Activated CD4-positive, alpha-beta memory T cell treated with anti-CD3 and anti-CD28 coated beads for 36 hours (primary cell): ENCODE measurements at regions of chr11 and their contacts with region 1.

Region 1: GRCh38 chr11:65117216-65118096 is at the start of gene ZNHIT2:
- DNase-seq: peak; percentile 100
- H3K4me3 Mint-ChIP-seq: peak within 1 kb of the TSS; percentile 86
- H3K27ac Mint-ChIP-seq: peak within 1 kb of the TSS; percentile 95
- H3K4me1 Mint-ChIP-seq: peaks cover 68% of the 10 kb centered on the region
- H3K27me3 Mint-ChIP-seq: no peaks in the 10 kb centered on the region
- total RNA-seq, gene ZNHIT2: 9.3 to 9.7 TPM

Region 2: GRCh38 chr11:64240394-64241174 is 876.9 kb before region 1 on chr11 and contains the start of gene FKBP2:
- CTCF ChIA-PET with region 1: no interaction called
- POLR2A ChIA-PET with region 1: no interaction called
- intact Hi-C with region 1: loop called (anchors 10 kb)
- DNase-seq: peak; percentile 98
- H3K4me3 Mint-ChIP-seq: peak within 1 kb of the TSS; percentile 89
- H3K27ac Mint-ChIP-seq: peak within 1 kb of the TSS; percentile 98
- H3K4me1 Mint-ChIP-seq: peaks cover 37% of the 10 kb centered on the region
- H3K27me3 Mint-ChIP-seq: no peaks in the 10 kb centered on the region
- total RNA-seq, gene FKBP2: 28.7 to 34.9 TPM

Region 3: GRCh38 chr11:64723117-64723906 is 394.1 kb before region 1 on chr11 and contains the start of gene NRXN2:
- CTCF ChIA-PET with region 1: no interaction called
- POLR2A ChIA-PET with region 1: no interaction called
- intact Hi-C with region 1: no loop called
- DNase-seq: peak; percentile 91
- H3K4me3 Mint-ChIP-seq: peak within 1 kb of the TSS; percentile 59
- H3K27ac Mint-ChIP-seq: peak within 1 kb of the TSS; percentile 28
- H3K4me1 Mint-ChIP-seq: peaks cover 6% of the 10 kb centered on the region
- H3K27me3 Mint-ChIP-seq: peaks cover 15% of the 10 kb centered on the region
- total RNA-seq, gene NRXN2: 0.31 to 0.41 TPM

Region 4: GRCh38 chr11:64846998-64847666 is 270.3 kb before region 1 on chr11:
- CTCF ChIA-PET with region 1: interaction called, 8 read pairs
- POLR2A ChIA-PET with region 1: no interaction called
- intact Hi-C with region 1: loop called (anchors 2 kb)
- DNase-seq: peak; percentile 94
- H3K4me3 Mint-ChIP-seq: no peak overlapping the region
- H3K27ac Mint-ChIP-seq: peak overlapping the region; percentile 18
- H3K4me1 Mint-ChIP-seq: peaks cover 48% of the 10 kb centered on the region
- H3K27me3 Mint-ChIP-seq: no peaks in the 10 kb centered on the region

Region 5: DNA sequence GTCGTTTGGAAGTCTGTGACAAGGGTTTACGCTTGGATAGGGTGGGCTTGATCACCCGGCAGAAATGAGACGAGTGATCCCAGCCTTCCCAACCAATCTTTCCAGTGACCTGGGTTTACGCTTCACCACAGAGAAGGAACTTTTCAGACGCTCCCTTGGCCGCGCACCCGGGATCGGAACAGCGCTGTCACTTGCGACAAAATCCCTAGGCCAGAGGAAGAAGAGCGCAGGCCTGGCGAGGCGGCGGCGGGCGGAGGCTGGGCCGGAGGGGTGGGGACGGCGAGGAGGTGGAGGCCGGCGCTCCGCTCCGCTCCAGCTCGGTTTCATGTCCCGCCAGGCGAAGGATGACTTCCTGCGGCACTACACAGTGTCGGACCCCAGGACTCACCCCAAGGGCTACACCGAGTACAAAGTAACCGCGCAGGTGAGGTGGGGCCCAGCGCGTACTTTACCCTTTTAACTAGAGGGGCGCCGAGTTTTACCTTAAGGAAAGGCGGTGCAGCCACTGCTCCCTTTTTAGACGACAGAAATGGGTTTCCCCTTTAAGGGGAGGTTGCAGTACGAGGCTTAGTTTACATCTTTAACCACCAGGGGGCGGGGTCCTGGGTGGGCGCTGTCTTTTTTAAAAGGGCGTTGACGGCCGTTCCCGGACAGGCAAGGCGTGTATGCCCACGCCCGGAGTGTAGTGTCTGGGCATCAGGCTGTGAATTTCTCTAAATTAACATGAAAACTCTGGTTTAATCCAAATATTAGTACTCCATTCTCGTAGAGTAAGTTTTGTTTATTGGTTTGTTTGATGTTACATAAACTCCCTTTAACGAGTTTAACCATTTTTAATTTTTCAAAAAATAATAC is 90.0 kb before region 1 on chr11 and contains the start of gene SNX15:
- CTCF ChIA-PET with region 1: interaction called, 3 read pairs
- POLR2A ChIA-PET with region 1: no interaction called
- intact Hi-C with region 1: loop called (anchors 1 kb)
- DNase-seq: peak; percentile 95
- H3K4me3 Mint-ChIP-seq: peak within 1 kb of the TSS; percentile 65
- H3K27ac Mint-ChIP-seq: peak within 1 kb of the TSS; percentile 86
- H3K4me1 Mint-ChIP-seq: peaks cover 14% of the 10 kb centered on the region
- H3K27me3 Mint-ChIP-seq: no peaks in the 10 kb centered on the region
- total RNA-seq, gene SNX15: 15.4 to 15.9 TPM

Region 6: DNA sequence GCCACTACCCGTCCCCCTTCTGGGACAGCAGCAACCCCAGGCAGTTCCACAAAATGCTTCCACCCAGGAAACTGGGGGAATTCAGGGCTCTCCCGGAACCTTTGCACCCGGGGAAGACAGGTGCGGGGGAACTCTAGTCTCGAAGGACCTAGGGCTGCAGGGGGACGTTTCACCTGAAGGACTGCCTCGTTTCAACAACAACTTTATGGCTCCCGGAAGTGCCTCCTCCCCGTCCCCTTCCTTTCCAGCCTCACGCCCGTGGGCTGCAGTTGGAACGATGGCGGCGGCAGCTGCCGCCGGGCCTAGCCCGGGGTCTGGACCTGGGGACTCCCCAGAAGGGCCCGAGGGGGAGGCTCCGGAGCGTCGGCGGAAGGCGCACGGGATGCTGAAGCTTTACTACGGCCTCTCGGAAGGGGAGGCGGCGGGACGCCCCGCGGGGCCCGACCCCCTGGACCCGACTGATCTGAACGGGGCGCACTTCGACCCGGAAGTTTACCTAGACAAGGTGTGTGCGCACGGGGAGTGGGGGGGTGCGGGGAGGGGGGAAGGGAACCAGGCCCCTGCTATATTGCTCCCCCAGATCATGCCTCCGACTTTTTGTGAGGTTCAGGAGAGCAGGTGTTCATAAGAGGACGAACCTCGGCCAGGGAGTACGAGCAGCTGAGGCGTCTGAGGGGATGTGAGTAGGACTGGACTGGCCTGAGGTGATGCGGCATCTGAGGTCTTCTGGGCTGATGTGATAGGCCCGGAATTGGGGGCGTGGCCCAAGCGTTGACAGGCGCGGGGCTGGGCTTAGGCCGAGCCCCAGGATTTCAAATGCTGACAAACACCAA is 21.3 kb before region 1 on chr11 and contains the start of gene VPS51:
- CTCF ChIA-PET with region 1: interaction called, 122 read pairs
- POLR2A ChIA-PET with region 1: interaction called, 15 read pairs
- intact Hi-C with region 1: loop called (anchors 1 kb)
- DNase-seq: peak; percentile 91
- H3K4me3 Mint-ChIP-seq: peak within 1 kb of the TSS; percentile 93
- H3K27ac Mint-ChIP-seq: peak within 1 kb of the TSS; percentile 97
- H3K4me1 Mint-ChIP-seq: peaks cover 17% of the 10 kb centered on the region
- H3K27me3 Mint-ChIP-seq: no peaks in the 10 kb centered on the region
- total RNA-seq, gene VPS51: 97.1 to 99.2 TPM

Region 7: DNA sequence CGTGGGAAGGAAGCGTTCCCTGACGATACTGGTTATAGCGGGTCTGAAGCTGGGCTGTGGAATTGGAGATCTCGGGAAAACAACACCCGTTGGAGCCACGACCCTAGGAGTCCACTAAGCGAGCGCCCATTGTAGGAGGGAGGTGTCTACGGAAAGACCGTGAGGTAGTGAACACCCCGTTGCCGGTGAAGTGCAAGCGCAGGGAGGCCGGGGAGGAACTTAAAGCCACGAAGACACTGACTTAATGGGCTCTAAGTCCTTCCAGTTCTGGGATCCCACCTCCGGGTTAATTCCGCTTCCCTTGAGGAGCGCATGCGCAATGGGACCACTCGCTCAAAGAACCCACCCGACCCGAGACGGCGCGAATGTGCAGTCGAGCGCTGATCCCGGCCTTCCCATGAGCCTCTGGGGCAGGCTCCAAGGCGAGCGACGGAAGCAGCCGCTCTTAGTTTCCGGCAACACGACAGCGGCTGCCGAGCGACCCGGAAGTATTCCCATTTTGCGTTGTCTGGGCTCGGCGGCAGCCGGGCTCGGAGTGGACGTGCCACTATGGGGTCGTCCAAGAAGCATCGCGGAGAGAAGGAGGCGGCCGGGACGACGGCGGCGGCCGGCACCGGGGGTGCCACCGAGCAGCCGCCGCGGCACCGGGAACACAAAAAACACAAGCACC is 843.9 kb after region 1 on chr11 and contains the start of gene SART1:
- CTCF ChIA-PET with region 1: no interaction called
- POLR2A ChIA-PET with region 1: no interaction called
- intact Hi-C with region 1: no loop called
- DNase-seq: peak; percentile 98
- H3K4me3 Mint-ChIP-seq: peak within 1 kb of the TSS; percentile 95
- H3K27ac Mint-ChIP-seq: peak within 1 kb of the TSS; percentile 94
- H3K4me1 Mint-ChIP-seq: peaks cover 43% of the 10 kb centered on the region
- H3K27me3 Mint-ChIP-seq: no peaks in the 10 kb centered on the region
- total RNA-seq, gene SART1: 59.1 to 60.5 TPM